ENCODE measurements at regions of chr22 and their contacts with region 1.

Region 1: DNA sequence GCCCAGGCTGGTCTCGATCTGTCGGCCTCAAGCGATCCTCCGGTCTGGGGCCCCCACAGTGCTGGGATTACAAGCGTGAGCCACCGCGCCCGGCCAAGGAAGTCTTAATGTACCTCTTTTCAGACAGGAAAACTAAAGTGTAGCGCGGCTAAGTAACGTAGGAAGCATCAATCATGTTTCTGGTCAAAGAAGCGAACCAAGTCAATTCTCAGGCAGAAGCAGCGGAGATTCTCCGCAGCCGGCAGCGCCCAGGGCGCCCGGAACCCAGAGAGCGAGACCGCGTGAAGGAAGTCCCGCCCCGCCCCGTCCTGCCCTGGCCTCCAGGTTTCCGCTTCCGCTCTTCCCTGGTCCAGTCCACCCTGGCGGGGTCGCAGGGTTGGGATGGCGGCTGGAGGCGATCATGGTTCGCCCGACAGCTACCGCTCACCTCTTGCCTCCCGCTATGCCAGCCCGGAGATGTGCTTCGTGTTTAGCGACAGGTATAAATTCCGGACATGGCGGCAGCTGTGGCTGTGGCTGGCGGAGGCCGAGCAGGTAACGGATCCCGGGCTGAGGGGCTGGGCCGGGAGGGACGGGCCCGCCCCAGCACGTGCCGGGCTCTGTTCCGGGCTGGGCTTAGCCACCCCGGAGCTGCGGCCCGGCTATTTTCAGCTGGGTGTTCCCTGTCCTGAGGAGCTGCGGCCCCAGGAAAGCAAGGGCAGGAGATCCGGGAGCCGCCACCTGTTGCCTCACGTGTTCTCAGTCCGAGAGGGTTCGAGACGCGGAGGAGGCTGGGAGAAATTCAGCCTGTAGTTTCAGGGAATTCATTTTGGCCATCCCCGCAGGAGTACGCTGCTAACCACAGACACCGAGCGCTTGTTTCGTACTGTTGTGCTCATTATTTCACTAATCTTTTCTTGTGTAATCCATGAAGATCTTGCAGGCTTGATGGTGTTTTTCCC is at the start of gene ADSL:
- DNase-seq: peak; percentile 81 to 86 (median 84)
- H3K4me3 ChIP-seq: peak within 1 kb of the TSS; percentile 91 to 95
- H3K4me3 Mint-ChIP-seq: peak within 1 kb of the TSS; percentile 92 to 99 (median 98)
- H3K27ac ChIP-seq: peak within 1 kb of the TSS; percentile 81
- H3K27ac Mint-ChIP-seq: peak within 1 kb of the TSS; percentile 92 to 99 (median 98)
- H3K4me1 ChIP-seq: peaks cover 63% of the 10 kb centered on the region
- H3K4me1 Mint-ChIP-seq: peaks cover 37 to 70% (median 51%) of the 10 kb centered on the region in 4 donors
- H3K27me3 ChIP-seq: no peaks in the 10 kb centered on the region
- H3K27me3 Mint-ChIP-seq: no peaks in the 10 kb centered on the region
- total RNA-seq, gene ADSL: 63.3 to 81.1 TPM

Region 2: DNA sequence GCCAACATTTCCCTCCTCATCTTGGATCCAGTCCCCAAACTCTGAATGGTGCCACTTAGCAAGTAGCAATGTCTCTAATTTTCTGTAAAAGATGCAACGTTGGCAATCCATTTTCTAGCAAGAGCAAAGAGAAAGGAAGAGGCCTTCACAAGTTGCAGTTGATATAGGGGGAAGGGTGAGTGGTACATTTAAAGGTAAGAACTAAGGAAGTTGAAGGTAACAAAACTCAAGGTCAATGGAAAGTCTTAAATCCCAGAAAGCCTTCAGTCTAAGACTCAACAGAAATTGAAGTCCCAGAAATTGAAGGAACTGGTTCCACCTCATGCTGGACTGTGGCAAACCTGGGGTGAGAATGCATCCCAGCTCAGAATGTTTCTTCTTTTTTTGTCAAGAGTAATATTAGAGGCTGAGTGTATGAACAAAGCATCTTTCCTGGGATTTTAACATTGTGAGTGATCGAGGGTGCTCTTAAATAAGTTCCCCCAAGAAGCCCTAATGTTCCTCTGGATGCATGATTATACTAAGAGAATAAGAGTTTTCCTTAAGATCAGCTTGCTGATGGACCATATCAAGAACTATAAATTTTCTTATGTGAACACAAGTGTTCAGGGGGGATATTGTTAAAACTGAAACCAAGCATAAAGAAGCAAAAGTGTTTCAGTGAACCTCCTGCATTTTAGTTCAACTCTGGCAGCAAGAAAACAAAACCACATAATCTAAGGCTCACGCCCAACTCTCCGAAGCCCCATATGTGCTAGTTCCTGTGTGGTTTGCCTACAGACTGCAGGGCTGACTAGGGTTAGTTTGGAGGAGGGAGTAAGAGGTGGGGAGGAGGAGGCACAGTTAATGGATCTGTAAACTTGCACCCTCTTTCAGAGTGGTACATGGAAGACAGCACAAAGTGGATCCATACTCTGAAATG is 445.9 kb before region 1 on chr22 and contains the start of gene GRAP2:
- CTCF ChIA-PET with region 1: interaction called, 3 read pairs
- POLR2A ChIA-PET with region 1: no interaction called
- intact Hi-C with region 1: loop called (anchors 5 kb)
- DNase-seq: peak; percentile 84 to 91 (median 86)
- H3K4me3 ChIP-seq: peak within 1 kb of the TSS; percentile 57 to 72
- H3K4me3 Mint-ChIP-seq: peak within 1 kb of the TSS; percentile 91 to 100 (median 97)
- H3K27ac ChIP-seq: peak within 1 kb of the TSS; percentile 75
- H3K27ac Mint-ChIP-seq: peak within 1 kb of the TSS in 6 of 7 donors; percentile 95 to 98 (median 98)
- H3K4me1 ChIP-seq: peaks cover 29% of the 10 kb centered on the region
- H3K4me1 Mint-ChIP-seq: peaks cover 9 to 31% (median 17%) of the 10 kb centered on the region in 4 donors
- H3K27me3 ChIP-seq: no peaks in the 10 kb centered on the region
- H3K27me3 Mint-ChIP-seq: no peaks in the 10 kb centered on the region
- total RNA-seq, gene GRAP2: 134 to 140 TPM

Region 3: GRCh38 chr22:40044102-40044869 is 302.2 kb before region 1 on chr22:
- CTCF ChIA-PET with region 1: interaction called, 22 read pairs
- POLR2A ChIA-PET with region 1: interaction called, 101 read pairs
- intact Hi-C with region 1: loop called (anchors 1 kb)
- DNase-seq: peak; percentile 99 to 100 (median 99)
- H3K4me3 ChIP-seq: peak overlapping the region; percentile 60 to 67
- H3K4me3 Mint-ChIP-seq: peak overlapping the region; percentile 95 to 100 (median 98)
- H3K27ac ChIP-seq: peak overlapping the region; percentile 88
- H3K27ac Mint-ChIP-seq: peak overlapping the region; percentile 99 to 100 (median 100)
- H3K4me1 ChIP-seq: peaks cover 32% of the 10 kb centered on the region
- H3K4me1 Mint-ChIP-seq: peaks cover 22 to 47% (median 36%) of the 10 kb centered on the region in 4 donors
- H3K27me3 ChIP-seq: no peaks in the 10 kb centered on the region
- H3K27me3 Mint-ChIP-seq: peaks cover 4 to 10% of the 10 kb centered on the region in 2 donors

Region 4: DNA sequence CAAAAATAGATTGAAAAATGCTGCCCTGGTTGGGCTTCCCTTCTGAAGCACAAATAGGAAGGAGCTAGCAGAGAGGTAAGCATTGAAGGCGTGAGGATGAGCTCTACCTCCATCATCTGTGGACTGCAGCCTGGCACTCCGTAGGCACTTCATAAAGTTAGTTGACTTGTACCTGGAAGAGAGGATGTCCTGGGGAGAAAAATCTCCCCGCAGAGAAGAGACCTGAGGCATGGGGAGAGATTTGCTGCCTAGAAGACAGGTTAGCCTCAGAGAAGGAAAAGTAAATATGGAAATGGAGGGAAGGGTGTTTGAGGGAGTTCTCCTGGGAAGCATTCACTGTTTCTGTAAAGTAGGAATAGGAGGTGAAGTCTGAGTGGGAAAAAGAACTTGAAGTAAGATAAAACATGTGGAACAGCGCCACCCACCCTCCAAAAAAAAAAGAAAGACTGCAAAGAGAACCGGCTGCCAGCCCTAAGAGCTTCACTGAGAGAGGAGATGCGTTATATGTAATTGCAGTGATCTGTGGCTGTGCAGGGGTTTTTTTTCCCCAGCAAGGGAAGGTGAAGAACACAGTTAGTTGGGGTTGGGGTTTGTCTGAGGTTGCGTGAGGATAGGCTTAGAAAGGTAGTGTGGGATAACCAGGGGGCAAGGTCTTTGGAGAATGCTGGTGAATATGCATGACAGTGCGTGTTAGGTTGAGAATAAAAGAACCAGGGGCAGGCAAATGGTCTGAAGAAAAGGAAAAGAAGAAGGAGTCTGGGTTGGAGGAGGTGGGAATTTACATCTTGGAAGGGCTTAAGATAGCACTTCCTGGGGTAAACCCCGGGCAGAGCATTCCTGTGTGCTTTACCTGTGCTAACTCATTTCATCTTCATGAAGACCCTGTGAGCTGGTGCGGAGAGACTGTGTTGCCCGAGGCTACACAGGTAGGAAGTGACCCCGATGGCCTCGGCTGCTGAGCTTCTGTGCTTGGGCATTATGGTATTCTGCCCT is 152.7 kb before region 1 on chr22:
- CTCF ChIA-PET with region 1: interaction called, 10 read pairs
- POLR2A ChIA-PET with region 1: interaction called, 5 read pairs
- intact Hi-C with region 1: no loop called
- DNase-seq: no peak
- H3K4me3 ChIP-seq: no peak overlapping the region
- H3K4me3 Mint-ChIP-seq: peak overlapping the region in 5 of 8 donors; percentile 15 to 74 (median 56)
- H3K27ac ChIP-seq: no peak overlapping the region
- H3K27ac Mint-ChIP-seq: peak overlapping the region; percentile 41 to 88 (median 77)
- H3K4me1 ChIP-seq: peaks cover 72% of the 10 kb centered on the region
- H3K4me1 Mint-ChIP-seq: peaks cover 55 to 91% (median 76%) of the 10 kb centered on the region in 4 donors
- H3K27me3 ChIP-seq: no peaks in the 10 kb centered on the region
- H3K27me3 Mint-ChIP-seq: no peaks in the 10 kb centered on the region

Region 5: GRCh38 chr22:40276996-40277823 is 69.2 kb before region 1 on chr22:
- CTCF ChIA-PET with region 1: interaction called, 9 read pairs
- POLR2A ChIA-PET with region 1: interaction called, 12 read pairs
- intact Hi-C with region 1: no loop called
- DNase-seq: no peak
- H3K4me3 ChIP-seq: no peak overlapping the region
- H3K4me3 Mint-ChIP-seq: peak overlapping the region in 4 of 8 donors; percentile 22 to 98 (median 30)
- H3K27ac ChIP-seq: peak overlapping the region; percentile 66
- H3K27ac Mint-ChIP-seq: peak overlapping the region; percentile 31 to 99 (median 84)
- H3K4me1 ChIP-seq: peaks cover 53% of the 10 kb centered on the region
- H3K4me1 Mint-ChIP-seq: peaks cover 25 to 73% (median 51%) of the 10 kb centered on the region in 4 donors
- H3K27me3 ChIP-seq: no peaks in the 10 kb centered on the region
- H3K27me3 Mint-ChIP-seq: no peaks in the 10 kb centered on the region

Region 6: GRCh38 chr22:40326905-40327735 is 19.3 kb before region 1 on chr22:
- CTCF ChIA-PET with region 1: interaction called, 123 read pairs
- POLR2A ChIA-PET with region 1: interaction called, 144 read pairs
- intact Hi-C with region 1: loop called (anchors 1 kb)
- DNase-seq: peak in 4 of 5 donors; percentile 29 to 80 (median 47)
- H3K4me3 ChIP-seq: no peak overlapping the region
- H3K4me3 Mint-ChIP-seq: peak overlapping the region; percentile 51 to 82 (median 56)
- H3K27ac ChIP-seq: peak overlapping the region; percentile 34
- H3K27ac Mint-ChIP-seq: peak overlapping the region; percentile 79 to 98 (median 94)
- H3K4me1 ChIP-seq: peaks cover 98% of the 10 kb centered on the region
- H3K4me1 Mint-ChIP-seq: peaks cover 69 to 100% (median 88%) of the 10 kb centered on the region in 4 donors
- H3K27me3 ChIP-seq: no peaks in the 10 kb centered on the region
- H3K27me3 Mint-ChIP-seq: no peaks in the 10 kb centered on the region

Region 7: DNA sequence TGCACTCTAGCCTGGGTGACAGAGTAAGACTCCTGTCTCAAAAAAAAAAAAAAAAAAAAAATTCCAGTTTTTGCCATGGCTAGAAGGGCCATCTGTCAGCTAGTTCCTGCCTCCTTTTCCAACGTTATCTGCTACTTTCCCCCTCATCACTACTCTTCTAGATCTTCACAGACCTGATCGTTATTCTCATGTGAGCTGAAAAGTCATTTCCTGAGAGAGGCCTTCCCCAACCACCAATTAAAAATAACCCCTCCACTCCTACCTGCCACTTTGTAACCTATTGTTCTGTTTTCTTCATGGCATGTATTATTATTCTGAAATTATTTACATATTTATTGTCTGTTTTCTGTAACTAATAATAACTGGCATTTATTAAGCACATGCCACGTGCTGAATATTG is 48.2 kb after region 1 on chr22:
- CTCF ChIA-PET with region 1: no interaction called
- POLR2A ChIA-PET with region 1: no interaction called
- intact Hi-C with region 1: no loop called
- DNase-seq: no peak
- H3K4me3 ChIP-seq: no peak overlapping the region
- H3K4me3 Mint-ChIP-seq: peak overlapping the region in 1 of 8 donors; percentile 78
- H3K27ac ChIP-seq: no peak overlapping the region
- H3K27ac Mint-ChIP-seq: peak overlapping the region in 5 of 7 donors; percentile 31 to 91 (median 75)
- H3K4me1 ChIP-seq: peaks cover 41% of the 10 kb centered on the region
- H3K4me1 Mint-ChIP-seq: peaks cover 39 to 75% (median 55%) of the 10 kb centered on the region in 4 donors
- H3K27me3 ChIP-seq: no peaks in the 10 kb centered on the region
- H3K27me3 Mint-ChIP-seq: no peaks in the 10 kb centered on the region